PC-9 (cell line): ENCODE measurements at regions of chr11 and their contacts with region 1.

Region 1: DNA sequence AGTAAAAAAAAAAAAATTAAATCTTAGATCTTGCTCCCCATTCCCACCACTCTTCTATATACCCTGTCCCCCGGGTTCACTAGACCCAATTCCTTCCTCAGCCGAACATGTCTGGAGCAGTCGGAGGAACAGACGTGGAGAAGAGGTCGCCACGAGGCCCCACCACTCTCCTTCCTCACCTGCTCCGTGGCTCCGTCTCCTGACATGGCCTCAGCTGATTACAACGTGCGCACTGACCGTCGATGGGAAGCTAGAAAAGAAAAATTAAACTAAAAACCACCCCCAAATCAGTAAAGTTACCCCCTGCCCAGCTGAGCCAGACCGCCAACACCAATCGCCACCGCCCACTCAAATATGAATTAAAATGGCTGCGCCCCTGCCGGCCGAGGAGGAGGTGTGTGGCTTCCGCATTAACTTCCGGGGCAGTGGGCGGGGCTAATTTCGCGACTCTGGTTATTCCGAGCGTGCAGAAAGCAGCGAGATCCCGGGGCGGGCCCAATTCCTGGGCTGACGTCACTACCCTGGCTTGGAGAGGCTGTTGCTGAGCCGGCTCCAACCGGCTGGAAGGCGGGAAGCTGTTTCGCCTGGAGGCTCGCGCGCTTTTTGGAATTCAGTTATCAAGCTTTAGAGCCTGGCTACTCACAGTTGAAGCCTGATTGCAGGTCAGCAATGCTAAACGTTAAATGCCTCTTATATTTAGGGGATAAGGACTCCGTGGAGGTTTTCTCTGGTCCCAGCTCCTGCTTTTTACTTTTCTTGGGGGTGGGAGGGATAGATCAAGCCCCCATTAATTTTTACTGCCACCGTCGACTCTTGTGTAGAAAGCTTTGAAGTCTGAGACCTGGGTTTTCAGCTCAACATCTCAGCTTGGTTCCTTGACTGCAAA is at the start of gene CSTF3:
- DNase-seq: peak; percentile 97 to 100
- H3K4me3 ChIP-seq: peak within 1 kb of the TSS; percentile 76
- H3K27ac ChIP-seq: peak within 1 kb of the TSS; percentile 75
- H3K4me1 ChIP-seq: peaks cover 35% of the 10 kb centered on the region
- H3K27me3 ChIP-seq: no peaks in the 10 kb centered on the region
- CTCF ChIP-seq: peak; percentile 65
- total RNA-seq, gene CSTF3: 45.6 and 46.5 TPM in 2 replicates

Region 2: GRCh38 chr11:32583459-32584271 is 577.7 kb before region 1 on chr11 and contains the start of gene EIF3M:
- CTCF ChIA-PET with region 1: no interaction called
- POLR2A ChIA-PET with region 1: no interaction called
- intact Hi-C with region 1: loop called (anchors 5 kb)
- DNase-seq: peak; percentile 92 to 97
- H3K4me3 ChIP-seq: peak within 1 kb of the TSS; percentile 92
- H3K27ac ChIP-seq: peak within 1 kb of the TSS; percentile 83
- H3K4me1 ChIP-seq: peaks cover 46% of the 10 kb centered on the region
- H3K27me3 ChIP-seq: no peaks in the 10 kb centered on the region
- CTCF ChIP-seq: no peak
- total RNA-seq, gene EIF3M: 322 and 357 TPM in 2 replicates

Region 3: GRCh38 chr11:33039274-33040032 is 121.9 kb before region 1 on chr11 and contains the start of gene TCP11L1:
- CTCF ChIA-PET with region 1: no interaction called
- POLR2A ChIA-PET with region 1: no interaction called
- intact Hi-C with region 1: loop called (anchors 1 kb)
- DNase-seq: peak in 1 of 2 experiments; percentile 91
- H3K4me3 ChIP-seq: peak within 1 kb of the TSS; percentile 80
- H3K27ac ChIP-seq: peak within 1 kb of the TSS; percentile 60
- H3K4me1 ChIP-seq: peaks cover 6% of the 10 kb centered on the region
- H3K27me3 ChIP-seq: no peaks in the 10 kb centered on the region
- CTCF ChIP-seq: no peak
- total RNA-seq, gene TCP11L1: 8.1 and 10.3 TPM in 2 replicates

Region 4: DNA sequence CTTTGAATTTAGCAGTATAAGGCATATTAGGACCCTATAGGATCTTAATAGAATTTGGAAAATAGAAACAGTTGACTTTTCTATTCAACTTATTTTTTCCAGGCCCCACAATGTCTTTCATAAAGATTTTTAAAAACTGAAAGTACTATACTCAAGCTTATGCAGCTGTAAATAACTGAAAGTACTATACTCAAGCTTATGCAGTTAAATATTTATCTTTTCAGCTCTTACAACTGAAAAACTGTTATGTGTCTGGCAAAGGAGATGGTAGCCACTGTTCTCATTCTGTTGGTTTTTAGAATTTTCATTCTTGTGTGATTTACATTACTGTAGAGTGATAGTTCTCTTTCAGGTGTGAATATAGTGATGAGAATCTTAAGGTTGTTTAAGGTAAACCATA is 112.3 kb after region 1 on chr11:
- CTCF ChIA-PET with region 1: no interaction called
- POLR2A ChIA-PET with region 1: interaction called, 11 read pairs
- intact Hi-C with region 1: no loop called
- DNase-seq: no peak
- H3K4me3 ChIP-seq: no peak overlapping the region
- H3K27ac ChIP-seq: no peak overlapping the region
- H3K4me1 ChIP-seq: peaks cover 18% of the 10 kb centered on the region
- H3K27me3 ChIP-seq: no peaks in the 10 kb centered on the region
- CTCF ChIP-seq: no peak

Region 5: GRCh38 chr11:33742249-33742851 is 581.0 kb after region 1 on chr11:
- CTCF ChIA-PET with region 1: interaction called, 13 read pairs
- POLR2A ChIA-PET with region 1: no interaction called
- intact Hi-C with region 1: loop called (anchors 5 kb)
- DNase-seq: peak in 1 of 2 experiments; percentile 48
- H3K4me3 ChIP-seq: no peak overlapping the region
- H3K27ac ChIP-seq: no peak overlapping the region
- H3K4me1 ChIP-seq: peaks cover 8% of the 10 kb centered on the region
- H3K27me3 ChIP-seq: no peaks in the 10 kb centered on the region
- CTCF ChIP-seq: peak; percentile 82